Testis (tissue), 5 donors: ENCODE measurements at regions of chr5 and their contacts with region 1.

Region 1: GRCh38 chr5:142700566-142700965 is 14.7 kb upstream of the FGF1 start:
- DNase-seq: no peak
- H3K4me3 ChIP-seq: no peak overlapping the region
- H3K27ac ChIP-seq: no peak overlapping the region
- H3K4me1 ChIP-seq: peaks cover 17% of the 10 kb centered on the region
- H3K27me3 ChIP-seq: no peaks in the 10 kb centered on the region
- CTCF ChIP-seq: no peak
- POLR2A ChIP-seq: no peak

Region 2: DNA sequence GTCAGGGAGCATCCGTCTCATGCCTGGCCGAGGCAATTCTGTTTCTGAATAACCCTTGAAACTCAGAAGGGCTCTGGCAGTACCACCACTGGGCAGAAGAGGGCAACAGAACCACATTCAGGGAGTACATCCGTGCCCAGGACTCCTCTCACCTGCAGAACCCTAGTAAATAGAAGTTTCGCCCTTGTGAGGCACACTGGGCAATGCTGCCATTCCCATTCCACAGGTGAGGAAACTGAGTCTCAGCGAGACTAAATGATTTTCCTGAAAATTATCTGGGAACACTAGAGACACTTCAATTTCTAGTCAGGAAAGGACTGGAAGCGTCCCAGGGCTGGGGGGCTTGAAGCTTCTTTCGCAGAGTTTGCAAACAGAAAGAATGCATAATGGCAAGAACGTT is 89.4 kb before region 1 on chr5:
- intact Hi-C with region 1: loop called (anchors 10 kb)
- DNase-seq: peak; percentile 86
- H3K4me3 ChIP-seq: no peak overlapping the region
- H3K27ac ChIP-seq: no peak overlapping the region
- H3K4me1 ChIP-seq: no peaks in the 10 kb centered on the region
- H3K27me3 ChIP-seq: no peaks in the 10 kb centered on the region
- CTCF ChIP-seq: peak; percentile 61 to 91 (median 77)
- POLR2A ChIP-seq: no peak

Region 3: GRCh38 chr5:143341807-143342570 is 641.4 kb after region 1 on chr5:
- intact Hi-C with region 1: no loop called
- DNase-seq: no peak
- H3K4me3 ChIP-seq: no peak overlapping the region
- H3K27ac ChIP-seq: no peak overlapping the region
- H3K4me1 ChIP-seq: no peaks in the 10 kb centered on the region
- H3K27me3 ChIP-seq: no peaks in the 10 kb centered on the region
- CTCF ChIP-seq: no peak
- POLR2A ChIP-seq: no peak